PC-9 (cell line): ENCODE measurements at regions of chr2 and their contacts with region 1.

Region 1: GRCh38 chr2:238636269-238637073 is 209.7 kb downstream of the ASB1 start:
- DNase-seq: peak; percentile 85 to 90
- H3K4me3 ChIP-seq: no peak overlapping the region
- H3K27ac ChIP-seq: peak overlapping the region; percentile 47; the same call in 1 of the 2 replicates
- H3K4me1 ChIP-seq: peaks cover 15% of the 10 kb centered on the region
- H3K27me3 ChIP-seq: peaks cover 82% of the 10 kb centered on the region
- CTCF ChIP-seq: no peak

Region 2: GRCh38 chr2:238042849-238043584 is 593.5 kb before region 1 on chr2:
- CTCF ChIA-PET with region 1: no interaction called
- POLR2A ChIA-PET with region 1: no interaction called
- intact Hi-C with region 1: no loop called
- DNase-seq: no peak
- H3K4me3 ChIP-seq: no peak overlapping the region
- H3K27ac ChIP-seq: no peak overlapping the region
- H3K4me1 ChIP-seq: no peaks in the 10 kb centered on the region
- H3K27me3 ChIP-seq: no peaks in the 10 kb centered on the region
- CTCF ChIP-seq: no peak

Region 3: GRCh38 chr2:238438856-238439849 is 197.3 kb before region 1 on chr2:
- CTCF ChIA-PET with region 1: no interaction called
- POLR2A ChIA-PET with region 1: no interaction called
- intact Hi-C with region 1: loop called (anchors 2 kb)
- DNase-seq: peak; percentile 86 to 89
- H3K4me3 ChIP-seq: no peak overlapping the region
- H3K27ac ChIP-seq: peak overlapping the region; percentile 81
- H3K4me1 ChIP-seq: peaks cover 13% of the 10 kb centered on the region
- H3K27me3 ChIP-seq: no peaks in the 10 kb centered on the region
- CTCF ChIP-seq: no peak

Region 4: GRCh38 chr2:238475566-238475965 is 160.9 kb before region 1 on chr2:
- CTCF ChIA-PET with region 1: no interaction called
- POLR2A ChIA-PET with region 1: interaction called, 24 read pairs
- intact Hi-C with region 1: no loop called
- DNase-seq: no peak
- H3K4me3 ChIP-seq: no peak overlapping the region
- H3K27ac ChIP-seq: no peak overlapping the region
- H3K4me1 ChIP-seq: no peaks in the 10 kb centered on the region
- H3K27me3 ChIP-seq: no peaks in the 10 kb centered on the region
- CTCF ChIP-seq: no peak

Region 5: DNA sequence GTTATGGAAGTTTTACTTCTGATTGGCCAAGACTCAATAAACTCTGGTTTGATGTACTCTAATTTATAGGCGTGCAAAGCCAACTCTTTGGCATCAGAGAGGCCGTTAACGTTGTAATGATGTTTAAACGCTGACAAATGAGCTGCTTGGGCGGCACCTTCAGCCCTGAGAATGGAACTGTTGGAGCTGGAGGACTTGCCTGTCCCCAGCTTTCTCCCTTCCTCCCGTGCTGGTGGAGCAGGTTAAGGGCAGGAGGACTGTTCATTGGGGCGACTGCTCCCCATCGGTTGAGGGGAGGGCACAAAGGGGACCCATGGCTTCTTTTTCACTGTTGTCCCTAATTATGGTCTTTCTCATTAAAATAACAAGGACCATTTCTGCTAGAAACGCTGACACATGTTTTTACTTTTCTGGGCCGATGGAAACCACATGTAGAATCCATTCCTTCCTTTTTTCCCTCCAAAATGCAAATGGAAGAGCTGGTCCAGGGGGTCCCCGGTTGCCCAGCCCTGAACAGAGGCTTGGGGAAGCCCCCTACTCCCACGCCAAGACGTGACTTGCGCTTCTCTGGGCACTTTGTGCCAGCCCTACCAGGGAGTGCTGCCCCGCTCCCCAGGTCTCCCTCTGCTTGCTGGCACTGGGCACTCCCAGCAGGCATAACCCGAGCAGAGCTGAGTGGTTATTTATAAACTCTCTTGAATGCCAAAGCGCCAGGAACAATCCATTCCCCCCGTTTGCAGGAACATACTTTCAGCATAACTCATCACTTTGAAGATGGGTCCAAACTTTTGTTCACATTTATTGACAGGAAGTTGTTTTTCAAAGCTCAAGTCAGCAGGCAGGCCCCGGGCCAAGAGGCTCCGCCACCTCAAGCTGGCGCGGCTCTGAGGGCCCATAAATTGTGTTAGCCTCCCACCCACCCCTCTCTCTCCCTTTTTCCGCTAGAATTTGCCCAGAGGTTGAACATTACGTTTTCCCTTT is 39.6 kb before region 1 on chr2:
- CTCF ChIA-PET with region 1: no interaction called
- POLR2A ChIA-PET with region 1: no interaction called
- intact Hi-C with region 1: loop called (anchors 2 kb)
- DNase-seq: peak; percentile 67 to 74
- H3K4me3 ChIP-seq: no peak overlapping the region
- H3K27ac ChIP-seq: no peak overlapping the region
- H3K4me1 ChIP-seq: peaks cover 6% of the 10 kb centered on the region; the same call in 1 of the 2 replicates
- H3K27me3 ChIP-seq: peaks cover 75% of the 10 kb centered on the region
- CTCF ChIP-seq: no peak

Region 6: DNA sequence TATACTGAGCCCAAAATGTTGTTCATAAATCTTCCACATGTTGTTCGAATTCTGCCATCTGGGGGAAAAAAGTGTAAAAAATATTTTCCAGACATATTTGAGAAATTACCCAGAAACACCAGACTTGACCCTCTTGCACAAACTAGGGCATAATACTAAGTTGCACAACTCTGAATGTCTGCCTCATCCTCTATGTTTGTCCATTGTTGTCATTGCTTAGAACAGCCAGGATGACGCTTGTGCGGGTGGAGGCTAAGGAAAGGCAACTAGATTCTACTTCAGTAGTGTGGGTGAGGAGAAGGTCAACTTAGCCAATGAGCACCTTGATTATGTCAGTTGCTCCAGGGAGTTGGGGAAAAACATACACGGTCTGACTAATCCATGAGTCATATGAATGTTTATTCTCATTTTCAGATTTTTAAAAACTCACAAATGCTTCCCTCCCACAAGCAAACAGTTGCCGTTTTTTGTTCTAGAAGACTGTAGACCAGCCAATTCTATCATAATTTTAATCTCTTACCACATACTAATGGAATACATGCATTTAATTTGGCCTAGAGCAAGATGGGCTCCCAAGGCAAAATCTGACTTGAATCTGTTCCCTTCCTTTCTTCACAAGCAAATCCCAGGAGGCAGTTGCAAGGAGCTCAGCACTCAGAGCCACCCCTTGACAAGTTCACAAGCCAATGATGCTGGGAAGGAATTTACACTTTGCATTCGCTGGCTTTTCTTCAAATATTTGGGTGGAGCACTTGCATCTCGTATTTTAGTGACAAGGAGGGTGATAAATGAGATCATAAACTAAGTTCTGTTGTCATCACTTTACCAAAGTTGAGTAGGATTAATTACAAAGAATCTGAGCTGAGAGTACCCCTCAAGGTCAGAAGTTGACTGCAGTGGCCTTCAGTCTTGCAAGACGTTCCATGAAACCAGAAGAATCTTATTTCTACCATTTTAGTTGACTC is 48.2 kb after region 1 on chr2:
- CTCF ChIA-PET with region 1: no interaction called
- POLR2A ChIA-PET with region 1: interaction called, 6 read pairs
- intact Hi-C with region 1: loop called (anchors 1 kb)
- DNase-seq: peak; percentile 79 to 94
- H3K4me3 ChIP-seq: no peak overlapping the region
- H3K27ac ChIP-seq: peak overlapping the region; percentile 73
- H3K4me1 ChIP-seq: peaks cover 32% of the 10 kb centered on the region
- H3K27me3 ChIP-seq: peaks cover 13% of the 10 kb centered on the region
- CTCF ChIP-seq: no peak

Region 7: GRCh38 chr2:239137165-239137897 is 500.9 kb after region 1 on chr2:
- CTCF ChIA-PET with region 1: no interaction called
- POLR2A ChIA-PET with region 1: no interaction called
- intact Hi-C with region 1: no loop called
- DNase-seq: no peak
- H3K4me3 ChIP-seq: no peak overlapping the region
- H3K27ac ChIP-seq: no peak overlapping the region
- H3K4me1 ChIP-seq: no peaks in the 10 kb centered on the region
- H3K27me3 ChIP-seq: no peaks in the 10 kb centered on the region
- CTCF ChIP-seq: no peak